Posterior vena cava (tissue), 2 donors: ENCODE measurements at regions of chr18 and their contacts with region 1.

Region 1: DNA sequence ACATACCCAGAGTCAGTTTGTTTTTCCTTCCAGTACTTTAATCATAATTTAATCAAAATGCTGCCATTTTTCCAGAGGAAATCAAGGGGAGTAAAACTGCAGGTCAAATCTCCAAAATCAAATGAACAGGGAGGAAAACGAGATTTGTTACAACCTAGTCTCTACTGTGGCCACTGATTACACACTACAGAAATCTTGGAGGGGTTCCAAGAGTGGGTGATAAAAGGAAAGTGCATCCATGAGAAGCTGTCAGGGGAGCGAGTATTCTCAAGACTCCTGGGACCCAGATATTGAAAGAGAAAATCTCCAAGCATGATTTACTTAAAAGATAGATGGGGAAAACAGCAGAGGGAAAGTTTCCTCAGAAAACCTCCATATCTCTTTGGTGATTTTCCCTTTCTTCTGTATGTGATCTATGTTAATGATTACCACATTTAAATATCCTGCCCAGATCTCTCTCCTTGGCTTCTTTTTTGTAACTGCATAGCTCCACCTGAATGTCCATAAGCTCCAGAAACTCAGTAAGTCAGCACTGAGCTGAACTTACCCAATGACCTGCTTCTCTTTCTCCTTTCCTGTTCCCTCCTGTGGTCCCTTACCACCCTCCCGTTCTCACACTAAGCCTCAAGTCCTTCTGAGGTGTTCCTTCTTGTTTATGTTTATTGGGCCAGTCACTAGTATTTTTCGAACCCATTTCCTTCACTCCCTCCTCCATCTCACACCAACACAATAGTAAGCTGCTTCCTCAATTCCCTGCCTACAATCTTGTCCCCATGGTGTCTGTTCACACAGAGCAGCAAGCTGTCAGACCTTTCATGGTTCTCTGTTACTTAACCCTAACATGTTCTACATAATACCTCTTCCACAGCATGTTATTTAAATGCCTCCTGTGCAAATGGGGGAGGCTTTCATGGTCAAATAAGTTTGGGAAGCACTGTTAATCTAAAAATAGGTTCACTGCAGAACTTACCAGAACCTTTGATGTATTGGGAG is 73.9 kb upstream of the TWSG1 start:
- DNase-seq: no peak

Region 2: GRCh38 chr18:9466846-9467245 is 206.2 kb after region 1 on chr18:
- intact Hi-C with region 1: loop called in 1 of 2 experiments (anchors 10 kb)
- DNase-seq: no peak